GM12878 (cell line): ENCODE measurements at regions of chr10 and their contacts with region 1.

Region 1: DNA sequence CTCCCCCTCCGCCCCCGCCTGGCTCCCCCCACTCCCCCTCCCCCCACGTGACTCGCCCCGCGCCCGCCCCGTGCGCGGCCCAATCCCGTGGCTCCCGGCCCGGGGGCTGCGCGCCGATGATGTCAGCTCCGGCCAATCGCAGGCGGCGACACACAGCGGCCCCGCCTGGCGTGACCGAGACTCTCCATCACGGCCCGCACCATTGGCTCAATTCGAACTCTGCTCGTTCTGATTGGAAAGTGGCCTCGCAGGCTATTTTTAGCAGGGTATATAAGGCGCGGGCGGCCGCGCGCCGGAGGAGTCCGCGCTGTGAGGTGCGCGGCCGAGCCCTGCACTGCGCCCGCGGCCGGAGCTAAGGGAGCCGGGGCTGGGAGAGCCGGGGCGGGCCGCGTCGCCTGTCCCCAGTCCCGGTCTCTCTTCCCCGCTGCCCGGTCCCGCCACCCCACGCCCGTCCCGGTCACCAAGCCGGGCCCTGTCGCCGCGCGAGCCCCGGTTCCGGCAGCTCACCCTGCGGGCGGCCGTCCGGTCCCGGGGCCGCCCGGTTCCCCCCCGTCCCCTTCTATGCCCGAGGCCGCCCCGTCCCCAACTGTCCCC is 345 bp upstream of the KLF6 start:
- DNase-seq: peak; percentile 90
- ATAC-seq: peak; percentile 66
- H3K4me3 ChIP-seq: peak overlapping the region; percentile 78
- H3K27ac ChIP-seq: peak overlapping the region; percentile 96
- H3K4me1 ChIP-seq: peaks cover 14% of the 10 kb centered on the region
- H3K27me3 ChIP-seq: no peaks in the 10 kb centered on the region
- CTCF ChIP-seq: no peak
- EP300 ChIP-seq: 0 out of 4 replicates have a peak, but pooled peaks of 1 of the 2 experiments have one; percentile 4
- POLR2A ChIP-seq: peak; percentile 88
- RAD21 ChIP-seq: no peak

Region 2: GRCh38 chr10:3408603-3409365 is 376.6 kb before region 1 on chr10:
- CTCF ChIA-PET with region 1: no interaction called
- POLR2A ChIA-PET with region 1: no interaction called
- RAD21 ChIA-PET with region 1: no interaction called
- SMC1A ChIA-PET with region 1: no interaction called
- in situ Hi-C with region 1: no loop called
- intact Hi-C with region 1: no loop called
- DNase-seq: no peak
- ATAC-seq: no peak
- H3K4me3 ChIP-seq: no peak overlapping the region
- H3K27ac ChIP-seq: no peak overlapping the region
- H3K4me1 ChIP-seq: no peaks in the 10 kb centered on the region
- H3K27me3 ChIP-seq: no peaks in the 10 kb centered on the region
- CTCF ChIP-seq: no peak
- EP300 ChIP-seq: no peak
- POLR2A ChIP-seq: no peak
- RAD21 ChIP-seq: no peak

Region 3: GRCh38 chr10:3472287-3473051 is 312.9 kb before region 1 on chr10:
- CTCF ChIA-PET with region 1: no interaction called
- POLR2A ChIA-PET with region 1: no interaction called
- RAD21 ChIA-PET with region 1: no interaction called
- SMC1A ChIA-PET with region 1: no interaction called
- in situ Hi-C with region 1: no loop called
- intact Hi-C with region 1: loop called (anchors 10 kb)
- DNase-seq: no peak
- ATAC-seq: no peak
- H3K4me3 ChIP-seq: peak overlapping the region; percentile 47; the same call in 1 of the 2 replicates
- H3K27ac ChIP-seq: peak overlapping the region; percentile 14
- H3K4me1 ChIP-seq: peaks cover 16% of the 10 kb centered on the region
- H3K27me3 ChIP-seq: no peaks in the 10 kb centered on the region
- CTCF ChIP-seq: no peak
- EP300 ChIP-seq: no peak
- POLR2A ChIP-seq: no peak
- RAD21 ChIP-seq: no peak

Region 4: GRCh38 chr10:3570855-3571266 is 214.5 kb before region 1 on chr10:
- CTCF ChIA-PET with region 1: no interaction called
- POLR2A ChIA-PET with region 1: no interaction called
- RAD21 ChIA-PET with region 1: no interaction called
- SMC1A ChIA-PET with region 1: no interaction called
- in situ Hi-C with region 1: no loop called
- intact Hi-C with region 1: no loop called
- DNase-seq: no peak
- ATAC-seq: no peak
- H3K4me3 ChIP-seq: no peak overlapping the region
- H3K27ac ChIP-seq: no peak overlapping the region
- H3K4me1 ChIP-seq: no peaks in the 10 kb centered on the region
- H3K27me3 ChIP-seq: no peaks in the 10 kb centered on the region
- CTCF ChIP-seq: no peak
- EP300 ChIP-seq: no peak
- POLR2A ChIP-seq: no peak
- RAD21 ChIP-seq: no peak

Region 5: GRCh38 chr10:3749600-3749999 is 35.8 kb before region 1 on chr10:
- CTCF ChIA-PET with region 1: interaction called, 5 read pairs
- POLR2A ChIA-PET with region 1: interaction called, 4 read pairs
- RAD21 ChIA-PET with region 1: interaction called, 12 read pairs
- SMC1A ChIA-PET with region 1: interaction called, 6 read pairs
- in situ Hi-C with region 1: no loop called
- intact Hi-C with region 1: no loop called
- DNase-seq: no peak
- ATAC-seq: peak; percentile 65
- H3K4me3 ChIP-seq: no peak overlapping the region
- H3K27ac ChIP-seq: no peak overlapping the region
- H3K4me1 ChIP-seq: peaks cover 6% of the 10 kb centered on the region
- H3K27me3 ChIP-seq: no peaks in the 10 kb centered on the region
- CTCF ChIP-seq: no peak
- EP300 ChIP-seq: no peak
- POLR2A ChIP-seq: no peak
- RAD21 ChIP-seq: no peak

Region 6: DNA sequence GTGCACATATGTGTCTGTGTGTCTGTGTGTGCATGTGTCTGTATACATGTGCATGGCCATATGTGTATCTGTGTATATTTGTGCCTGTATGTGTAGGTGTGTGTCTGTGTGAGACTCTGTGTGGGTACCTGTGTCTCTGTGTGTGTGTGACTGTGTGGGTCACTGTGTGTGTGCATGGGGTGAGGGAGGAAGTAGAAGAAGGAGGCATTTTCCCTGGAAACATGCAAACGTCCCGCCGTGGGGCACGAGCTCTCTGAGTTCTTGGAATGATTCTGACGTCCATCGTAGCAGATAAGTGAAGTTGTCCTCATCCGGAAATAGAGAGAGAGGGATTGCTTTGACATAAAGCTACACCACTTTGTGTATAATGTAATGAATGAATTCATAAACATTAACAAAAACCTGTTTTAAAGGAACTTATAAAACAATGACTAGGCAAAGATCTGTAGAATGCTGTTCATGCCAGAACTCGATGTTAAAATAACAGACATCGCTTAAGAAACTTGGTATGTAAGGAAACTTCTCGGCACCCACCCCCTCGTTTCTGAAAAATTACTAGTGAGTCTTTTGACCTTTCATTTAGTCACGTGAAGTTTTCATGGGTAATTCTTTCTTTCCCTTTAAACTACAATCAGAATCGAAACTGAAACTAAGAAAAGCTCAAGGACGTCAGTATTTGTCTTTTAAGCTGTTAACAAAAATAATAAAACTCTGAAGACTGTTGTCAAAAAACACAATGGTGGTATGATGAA is 43.2 kb after region 1 on chr10:
- CTCF ChIA-PET with region 1: interaction called, 4 read pairs
- POLR2A ChIA-PET with region 1: interaction called, 12 read pairs
- RAD21 ChIA-PET with region 1: interaction called, 14 read pairs
- SMC1A ChIA-PET with region 1: interaction called, 15 read pairs
- in situ Hi-C with region 1: no loop called
- intact Hi-C with region 1: no loop called
- DNase-seq: no peak
- ATAC-seq: peak; percentile 62
- H3K4me3 ChIP-seq: no peak overlapping the region
- H3K27ac ChIP-seq: peak overlapping the region; percentile 4
- H3K4me1 ChIP-seq: peaks cover 25% of the 10 kb centered on the region
- H3K27me3 ChIP-seq: no peaks in the 10 kb centered on the region
- CTCF ChIP-seq: no peak
- EP300 ChIP-seq: no peak
- POLR2A ChIP-seq: no peak
- RAD21 ChIP-seq: no peak

Region 7: GRCh38 chr10:3873728-3874461 is 88.5 kb after region 1 on chr10:
- CTCF ChIA-PET with region 1: interaction called, 5 read pairs
- POLR2A ChIA-PET with region 1: interaction called, 51 read pairs
- RAD21 ChIA-PET with region 1: interaction called, 88 read pairs
- SMC1A ChIA-PET with region 1: interaction called, 68 read pairs
- in situ Hi-C with region 1: no loop called
- intact Hi-C with region 1: loop called (anchors 1 kb)
- DNase-seq: peak; percentile 83
- ATAC-seq: peak; percentile 50
- H3K4me3 ChIP-seq: no peak overlapping the region
- H3K27ac ChIP-seq: peak overlapping the region; percentile 90
- H3K4me1 ChIP-seq: peaks cover 50% of the 10 kb centered on the region
- H3K27me3 ChIP-seq: no peaks in the 10 kb centered on the region
- CTCF ChIP-seq: no peak
- EP300 ChIP-seq: peak; percentile 97 to 100
- POLR2A ChIP-seq: no peak
- RAD21 ChIP-seq: peak; percentile 16; the same call in 1 of the 2 replicates

Region 8: GRCh38 chr10:3995302-3996210 is 210.2 kb after region 1 on chr10:
- CTCF ChIA-PET with region 1: no interaction called
- POLR2A ChIA-PET with region 1: no interaction called
- RAD21 ChIA-PET with region 1: no interaction called
- SMC1A ChIA-PET with region 1: no interaction called
- in situ Hi-C with region 1: no loop called
- intact Hi-C with region 1: no loop called
- DNase-seq: no peak
- ATAC-seq: no peak
- H3K4me3 ChIP-seq: no peak overlapping the region
- H3K27ac ChIP-seq: no peak overlapping the region
- H3K4me1 ChIP-seq: no peaks in the 10 kb centered on the region
- H3K27me3 ChIP-seq: no peaks in the 10 kb centered on the region
- CTCF ChIP-seq: no peak
- EP300 ChIP-seq: no peak
- POLR2A ChIP-seq: no peak
- RAD21 ChIP-seq: no peak

Region 9: GRCh38 chr10:4111643-4112042 is 326.3 kb after region 1 on chr10:
- CTCF ChIA-PET with region 1: no interaction called
- POLR2A ChIA-PET with region 1: no interaction called
- RAD21 ChIA-PET with region 1: no interaction called
- SMC1A ChIA-PET with region 1: no interaction called
- in situ Hi-C with region 1: no loop called
- intact Hi-C with region 1: no loop called
- DNase-seq: no peak
- ATAC-seq: no peak
- H3K4me3 ChIP-seq: no peak overlapping the region
- H3K27ac ChIP-seq: no peak overlapping the region
- H3K4me1 ChIP-seq: no peaks in the 10 kb centered on the region
- H3K27me3 ChIP-seq: no peaks in the 10 kb centered on the region; a peak in 1 of 4 replicates
- CTCF ChIP-seq: no peak
- EP300 ChIP-seq: no peak
- POLR2A ChIP-seq: no peak
- RAD21 ChIP-seq: no peak

Region 10: GRCh38 chr10:4131407-4132228 is 346.3 kb after region 1 on chr10:
- CTCF ChIA-PET with region 1: no interaction called
- POLR2A ChIA-PET with region 1: no interaction called
- RAD21 ChIA-PET with region 1: no interaction called
- SMC1A ChIA-PET with region 1: no interaction called
- in situ Hi-C with region 1: no loop called
- intact Hi-C with region 1: loop called (anchors 10 kb)
- DNase-seq: peak; percentile 66
- ATAC-seq: peak; percentile 85
- H3K4me3 ChIP-seq: 0 out of 2 replicates have a peak overlapping the region, but pooled peaks have one; percentile 19
- H3K27ac ChIP-seq: no peak overlapping the region; the same call in 1 of the 2 replicates
- H3K4me1 ChIP-seq: peaks cover 38% of the 10 kb centered on the region
- H3K27me3 ChIP-seq: no peaks in the 10 kb centered on the region; a peak in 1 of 4 replicates
- CTCF ChIP-seq: no peak
- EP300 ChIP-seq: peak; percentile 10 to 18; a peak in 1 of 4 replicates
- POLR2A ChIP-seq: no peak
- RAD21 ChIP-seq: no peak